ENCODE measurements at regions of chr2 and their contacts with region 1.

Region 1: GRCh38 chr2:203578759-203579643 is 43.9 kb upstream of the RAPH1 start:
- DNase-seq: peak; percentile 67
- ATAC-seq: peak; percentile 95
- H3K4me3 Mint-ChIP-seq: no peak overlapping the region
- H3K27ac Mint-ChIP-seq: peak overlapping the region; percentile 78
- H3K4me1 Mint-ChIP-seq: peaks cover 21% of the 10 kb centered on the region
- H3K27me3 Mint-ChIP-seq: no peaks in the 10 kb centered on the region

Region 2: GRCh38 chr2:203535078-203535783 is 43.8 kb before region 1 on chr2 and contains the start of gene RAPH1:
- CTCF ChIA-PET with region 1: no interaction called
- POLR2A ChIA-PET with region 1: no interaction called
- intact Hi-C with region 1: loop called (anchors 1 to 2 kb)
- DNase-seq: peak; percentile 85
- ATAC-seq: peak; percentile 77
- H3K4me3 Mint-ChIP-seq: peak within 1 kb of the TSS; percentile 74
- H3K27ac Mint-ChIP-seq: peak within 1 kb of the TSS; percentile 56
- H3K4me1 Mint-ChIP-seq: peaks cover 30% of the 10 kb centered on the region
- H3K27me3 Mint-ChIP-seq: peaks cover 9% of the 10 kb centered on the region
- total RNA-seq, gene RAPH1: 8.5 to 9.9 TPM

Region 3: DNA sequence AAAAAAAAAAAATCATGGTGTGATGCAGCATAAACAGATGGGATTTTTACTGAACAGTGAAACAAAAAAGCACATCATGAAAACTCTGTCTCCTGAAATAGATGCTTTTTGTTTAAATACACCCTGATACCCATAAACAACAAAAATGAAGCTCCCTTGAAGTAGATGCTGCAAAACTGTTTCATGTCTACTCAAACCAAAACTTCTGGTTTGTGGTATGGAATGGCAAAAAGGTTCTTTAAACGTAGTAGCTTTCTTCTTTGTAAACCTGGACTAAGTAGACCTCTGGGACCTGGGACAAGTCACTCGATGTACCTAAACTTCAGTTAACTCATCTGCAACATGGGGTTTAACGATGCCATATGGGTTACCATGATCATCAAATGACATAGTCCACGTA is 20.5 kb after region 1 on chr2:
- CTCF ChIA-PET with region 1: interaction called, 3 read pairs
- POLR2A ChIA-PET with region 1: interaction called, 4 read pairs
- intact Hi-C with region 1: loop called in 1 of 2 experiments (anchors 2 kb)
- DNase-seq: no peak
- ATAC-seq: peak; percentile 74
- H3K4me3 Mint-ChIP-seq: no peak overlapping the region
- H3K27ac Mint-ChIP-seq: no peak overlapping the region
- H3K4me1 Mint-ChIP-seq: peaks cover 19% of the 10 kb centered on the region
- H3K27me3 Mint-ChIP-seq: peaks cover 2% of the 10 kb centered on the region

Region 4: GRCh38 chr2:203782262-203782976 is 203.4 kb after region 1 on chr2:
- CTCF ChIA-PET with region 1: no interaction called
- POLR2A ChIA-PET with region 1: no interaction called
- intact Hi-C with region 1: loop called in 1 of 2 experiments (anchors 2 kb)
- DNase-seq: peak; percentile 81
- ATAC-seq: peak; percentile 94
- H3K4me3 Mint-ChIP-seq: no peak overlapping the region
- H3K27ac Mint-ChIP-seq: peak overlapping the region; percentile 89
- H3K4me1 Mint-ChIP-seq: peaks cover 52% of the 10 kb centered on the region
- H3K27me3 Mint-ChIP-seq: no peaks in the 10 kb centered on the region

Region 5: DNA sequence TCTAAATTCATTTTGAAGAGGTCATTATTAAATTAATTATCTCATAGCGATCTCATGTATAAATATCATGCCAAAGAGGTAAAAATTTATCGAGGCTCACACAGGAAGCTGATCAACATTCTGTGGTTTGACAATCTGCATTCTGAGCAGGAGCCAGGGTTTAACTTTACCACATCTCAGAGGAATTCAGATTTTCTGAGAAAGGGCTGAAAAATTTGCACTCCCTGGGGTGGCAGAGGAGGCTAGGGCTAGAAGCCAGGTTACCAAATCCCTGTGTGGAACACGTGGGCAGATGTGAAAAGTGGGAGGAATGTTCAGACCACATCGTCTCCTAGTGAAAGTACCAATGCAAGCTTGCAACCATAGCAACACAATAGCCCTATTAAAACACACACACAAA is 225.1 kb after region 1 on chr2:
- CTCF ChIA-PET with region 1: interaction called, 3 read pairs
- POLR2A ChIA-PET with region 1: no interaction called
- intact Hi-C with region 1: loop called in 1 of 2 experiments (anchors 5 kb)
- DNase-seq: peak; percentile 63
- ATAC-seq: peak; percentile 30
- H3K4me3 Mint-ChIP-seq: peak overlapping the region; percentile 17
- H3K27ac Mint-ChIP-seq: peak overlapping the region; percentile 82
- H3K4me1 Mint-ChIP-seq: peaks cover 86% of the 10 kb centered on the region
- H3K27me3 Mint-ChIP-seq: no peaks in the 10 kb centered on the region

Region 6: GRCh38 chr2:203893401-203893800 is 314.4 kb after region 1 on chr2:
- CTCF ChIA-PET with region 1: no interaction called
- POLR2A ChIA-PET with region 1: no interaction called
- intact Hi-C with region 1: loop called in 1 of 2 experiments (anchors 5 kb)
- DNase-seq: no peak
- ATAC-seq: no peak
- H3K4me3 Mint-ChIP-seq: peak overlapping the region; percentile 23
- H3K27ac Mint-ChIP-seq: peak overlapping the region; percentile 85
- H3K4me1 Mint-ChIP-seq: peaks cover 78% of the 10 kb centered on the region
- H3K27me3 Mint-ChIP-seq: peaks cover 2% of the 10 kb centered on the region

Measured in activated CD4-positive, alpha-beta T cell treated with anti-CD3 and anti-CD28 coated beads for 36 hours (primary cell).